ENCODE measurements at regions of chr9 and their contacts with region 1.

Region 1: DNA sequence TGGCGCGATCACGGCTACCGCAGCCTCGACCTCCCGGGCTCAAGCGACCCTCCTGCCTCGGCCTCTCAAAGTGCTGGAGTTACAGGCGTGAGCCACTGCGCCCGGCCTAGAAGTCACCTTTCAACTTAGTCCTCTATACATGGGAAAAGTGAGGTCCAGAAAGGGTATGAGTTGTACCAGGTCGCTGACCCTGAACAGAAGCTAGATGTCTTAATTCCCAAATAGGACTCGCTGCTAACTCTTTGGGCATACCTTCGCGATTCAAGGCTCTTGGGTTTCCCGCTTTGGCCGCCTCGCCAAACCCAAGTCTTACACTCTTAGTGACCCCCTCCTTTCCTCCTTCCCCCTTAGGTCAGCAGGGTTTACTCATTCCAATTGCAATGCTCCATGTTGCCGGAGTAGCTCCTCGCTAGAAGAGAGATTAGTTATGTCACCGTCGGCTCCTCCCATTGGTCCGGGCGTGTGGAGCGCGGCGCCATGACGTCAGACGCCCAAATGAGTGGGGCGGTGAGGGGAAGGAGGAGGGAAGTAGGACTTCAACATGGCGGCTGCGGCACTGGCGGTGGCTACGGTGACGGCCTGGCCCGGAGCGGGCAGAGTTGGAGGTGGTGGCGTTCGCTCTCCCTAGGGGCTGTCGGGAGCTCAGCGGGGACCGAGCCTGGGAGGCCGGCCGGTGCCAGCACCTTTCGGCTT is at the start of gene UBAP1:
- DNase-seq: peak; percentile 99
- H3K4me3 Mint-ChIP-seq: peak within 1 kb of the TSS; percentile 99
- H3K27ac Mint-ChIP-seq: peak within 1 kb of the TSS; percentile 99
- H3K4me1 Mint-ChIP-seq: peaks cover 16% of the 10 kb centered on the region
- H3K27me3 Mint-ChIP-seq: no peaks in the 10 kb centered on the region
- CTCF ChIP-seq: no peak
- total RNA-seq, gene UBAP1: 58.0 and 64.4 TPM in 2 replicates

Region 2: DNA sequence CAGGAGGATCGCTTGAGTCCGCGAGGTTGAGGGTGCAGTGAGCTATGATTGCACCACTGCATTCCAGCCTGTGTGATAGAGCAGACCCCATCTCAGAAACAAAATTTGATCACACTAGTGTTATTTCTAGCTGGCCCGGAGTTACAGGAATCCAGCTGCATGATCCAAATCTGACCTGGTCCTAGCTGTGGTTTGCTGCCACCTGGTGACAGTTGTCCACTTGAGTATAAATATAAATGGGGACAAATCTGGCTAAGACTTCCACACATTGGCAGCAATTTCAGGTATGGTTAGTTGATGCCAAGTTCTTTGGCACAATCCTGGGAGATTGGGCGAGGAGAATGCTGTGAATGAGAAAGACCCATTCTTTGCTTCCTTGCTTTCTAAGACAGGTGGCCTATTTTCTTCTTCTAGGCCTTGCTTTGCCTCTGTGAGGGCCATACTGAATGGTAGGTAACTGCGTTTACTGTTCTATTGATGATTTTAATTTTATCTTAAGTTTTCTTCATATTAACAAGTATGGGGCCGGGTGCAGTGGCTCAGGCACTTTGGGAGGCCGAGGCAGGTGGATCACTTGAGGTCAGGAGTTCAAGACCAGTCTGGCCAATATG is 326.3 kb before region 1 on chr9:
- CTCF ChIA-PET with region 1: no interaction called
- POLR2A ChIA-PET with region 1: no interaction called
- intact Hi-C with region 1: no loop called
- DNase-seq: peak; percentile 76
- H3K4me3 Mint-ChIP-seq: no peak overlapping the region
- H3K27ac Mint-ChIP-seq: no peak overlapping the region
- H3K4me1 Mint-ChIP-seq: peaks cover 12% of the 10 kb centered on the region
- H3K27me3 Mint-ChIP-seq: no peaks in the 10 kb centered on the region
- CTCF ChIP-seq: peak; percentile 74

Region 3: DNA sequence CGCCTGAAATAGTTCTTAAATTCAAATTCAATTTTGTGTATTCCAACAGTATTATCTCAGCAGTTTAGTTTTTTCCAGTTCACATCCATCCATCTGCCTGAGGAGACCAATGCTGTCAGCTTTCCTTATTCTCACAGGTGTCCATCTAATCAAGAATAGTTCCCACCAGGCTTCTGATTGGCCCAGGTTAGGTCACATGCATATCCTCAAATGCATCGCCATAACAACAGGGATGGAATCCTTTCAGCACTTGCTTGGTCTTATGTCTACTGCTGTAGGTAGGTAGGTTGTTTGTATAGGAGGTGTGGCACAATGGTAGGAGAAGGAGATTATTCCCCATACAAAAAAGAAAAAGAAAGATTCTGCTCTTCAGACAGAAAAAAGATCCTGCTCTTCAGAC is 270.5 kb before region 1 on chr9:
- CTCF ChIA-PET with region 1: no interaction called
- POLR2A ChIA-PET with region 1: no interaction called
- intact Hi-C with region 1: no loop called
- DNase-seq: no peak
- H3K4me3 Mint-ChIP-seq: no peak overlapping the region
- H3K27ac Mint-ChIP-seq: no peak overlapping the region
- H3K4me1 Mint-ChIP-seq: peaks cover 6% of the 10 kb centered on the region
- H3K27me3 Mint-ChIP-seq: no peaks in the 10 kb centered on the region
- CTCF ChIP-seq: no peak

Region 4: DNA sequence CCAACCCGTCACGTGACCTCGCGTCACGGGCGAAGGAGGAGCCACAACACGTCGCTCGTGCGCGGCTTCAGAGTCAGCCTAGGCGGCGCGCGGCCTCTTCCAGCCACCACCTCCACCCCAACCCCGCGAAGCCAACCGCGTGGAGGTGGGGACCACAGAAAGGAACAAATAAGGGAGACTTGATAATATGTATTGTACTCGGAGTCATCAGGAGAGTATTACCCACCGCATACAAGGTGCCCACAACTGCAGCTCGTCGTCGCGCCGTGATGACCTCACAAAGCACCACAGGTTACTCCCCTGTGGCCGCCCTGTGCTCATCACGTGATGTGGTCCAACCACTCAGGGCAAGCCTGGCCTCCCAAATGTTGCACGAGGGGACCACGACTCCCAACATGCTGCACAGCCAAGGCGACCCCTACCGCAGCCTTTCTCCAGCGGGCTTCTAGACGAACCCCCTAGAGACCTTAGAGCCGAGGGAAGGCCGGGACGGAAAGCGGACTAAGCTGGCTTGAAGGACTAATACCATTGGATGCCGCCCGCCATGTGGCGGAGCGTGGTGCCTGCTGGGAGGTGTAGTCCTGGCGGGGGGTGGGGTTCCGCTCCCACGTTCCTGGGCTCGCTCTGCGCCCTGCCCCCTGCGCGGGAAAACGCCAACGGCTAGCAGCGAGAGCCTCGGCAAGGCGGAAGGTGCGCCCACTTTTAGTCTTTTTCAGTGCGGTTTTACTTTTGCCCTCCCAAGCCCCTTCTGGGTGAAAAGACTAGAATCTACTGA is 129.6 kb before region 1 on chr9:
- CTCF ChIA-PET with region 1: no interaction called
- POLR2A ChIA-PET with region 1: interaction called, 25 read pairs
- intact Hi-C with region 1: no loop called
- DNase-seq: peak; percentile 98
- H3K4me3 Mint-ChIP-seq: peak overlapping the region; percentile 89
- H3K27ac Mint-ChIP-seq: peak overlapping the region; percentile 99
- H3K4me1 Mint-ChIP-seq: peaks cover 20% of the 10 kb centered on the region
- H3K27me3 Mint-ChIP-seq: no peaks in the 10 kb centered on the region
- CTCF ChIP-seq: no peak

Region 5: DNA sequence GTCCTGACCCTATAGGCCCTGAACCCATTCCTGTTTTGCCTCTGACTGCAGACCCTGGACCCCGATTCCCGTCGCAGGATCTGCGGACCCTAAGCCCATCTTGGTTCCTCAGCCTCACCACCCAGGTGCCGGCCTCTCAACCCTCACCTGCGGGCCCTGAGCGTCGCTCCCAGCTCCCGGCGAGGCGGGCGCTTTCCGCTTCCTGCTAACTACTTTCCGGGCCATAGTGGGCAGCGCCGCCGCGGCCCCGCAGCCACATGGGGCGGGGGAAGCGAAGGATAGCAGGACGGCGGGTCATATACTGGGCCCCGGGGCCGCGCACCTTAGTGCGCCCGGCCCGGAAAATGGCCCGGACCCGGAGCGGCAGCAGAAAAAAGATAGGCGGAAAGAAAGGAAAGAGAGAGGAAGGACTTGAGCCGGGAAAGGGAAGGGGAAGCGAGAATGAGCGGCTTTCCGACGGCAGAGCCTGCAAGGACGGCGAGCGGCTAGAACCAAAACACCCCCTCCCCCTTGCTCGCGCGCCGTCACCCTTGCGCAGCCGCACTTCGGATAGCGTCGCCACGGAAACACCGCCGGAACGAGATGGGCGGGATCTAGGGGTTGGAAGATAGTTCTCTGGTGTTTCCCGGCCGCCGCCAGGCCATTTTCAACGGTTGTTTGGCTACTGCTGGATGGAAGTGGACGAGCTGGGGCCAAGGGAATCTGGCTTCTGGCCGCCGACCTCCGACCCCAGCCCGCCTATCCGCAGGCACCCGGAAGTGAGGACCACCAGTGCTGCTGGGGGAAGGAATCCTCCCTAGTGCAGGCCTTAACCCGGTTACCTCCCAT is 52.2 kb before region 1 on chr9 and contains the start of gene DCAF12:
- CTCF ChIA-PET with region 1: interaction called, 3 read pairs
- POLR2A ChIA-PET with region 1: interaction called, 71 read pairs
- intact Hi-C with region 1: loop called (anchors 1 kb)
- DNase-seq: peak; percentile 93
- H3K4me3 Mint-ChIP-seq: peak within 1 kb of the TSS; percentile 93
- H3K27ac Mint-ChIP-seq: peak within 1 kb of the TSS; percentile 93
- H3K4me1 Mint-ChIP-seq: peaks cover 40% of the 10 kb centered on the region
- H3K27me3 Mint-ChIP-seq: no peaks in the 10 kb centered on the region
- CTCF ChIP-seq: no peak
- total RNA-seq, gene DCAF12: 39.8 and 44.2 TPM in 2 replicates

Region 6: DNA sequence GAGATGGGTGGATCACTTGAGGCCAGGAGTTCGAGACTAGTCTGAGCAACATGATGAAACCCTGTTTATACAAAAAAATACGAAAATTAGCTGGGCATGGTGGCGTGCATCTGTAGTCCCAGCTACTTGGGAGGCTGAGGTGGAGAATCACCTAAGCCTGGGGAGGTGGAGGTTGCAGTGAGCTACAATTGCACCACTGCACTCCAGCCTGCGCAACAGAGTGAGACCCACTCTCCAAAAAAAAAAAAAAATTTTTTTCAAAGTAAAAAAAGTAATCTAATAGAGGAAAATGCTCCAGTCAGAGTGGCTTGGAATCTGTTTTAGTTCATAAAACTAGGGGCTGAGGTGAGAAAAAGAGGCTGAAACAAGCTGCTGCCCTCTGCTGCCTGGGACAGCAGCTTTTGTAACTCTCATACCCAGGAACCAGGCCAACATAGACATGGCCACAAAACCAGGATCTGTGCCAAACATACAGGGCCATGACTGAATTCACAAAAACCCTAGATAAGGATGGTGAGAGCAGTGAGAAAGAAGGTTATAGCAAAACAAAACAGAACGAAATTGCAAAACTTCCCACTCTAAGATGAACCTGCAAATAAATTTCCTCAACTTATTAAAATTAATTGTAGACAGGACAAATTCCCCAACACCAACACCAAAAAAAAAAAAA is 39.1 kb before region 1 on chr9:
- CTCF ChIA-PET with region 1: no interaction called
- POLR2A ChIA-PET with region 1: interaction called, 17 read pairs
- intact Hi-C with region 1: no loop called
- DNase-seq: peak; percentile 89
- H3K4me3 Mint-ChIP-seq: no peak overlapping the region
- H3K27ac Mint-ChIP-seq: no peak overlapping the region
- H3K4me1 Mint-ChIP-seq: peaks cover 15% of the 10 kb centered on the region
- H3K27me3 Mint-ChIP-seq: no peaks in the 10 kb centered on the region
- CTCF ChIP-seq: peak; percentile 30

Region 7: GRCh38 chr9:34158362-34158869 is 20.2 kb before region 1 on chr9:
- CTCF ChIA-PET with region 1: interaction called, 5 read pairs
- POLR2A ChIA-PET with region 1: interaction called, 93 read pairs
- intact Hi-C with region 1: loop called (anchors 2 kb)
- DNase-seq: peak; percentile 84
- H3K4me3 Mint-ChIP-seq: no peak overlapping the region
- H3K27ac Mint-ChIP-seq: peak overlapping the region; percentile 57
- H3K4me1 Mint-ChIP-seq: peaks cover 20% of the 10 kb centered on the region
- H3K27me3 Mint-ChIP-seq: no peaks in the 10 kb centered on the region
- CTCF ChIP-seq: no peak

Region 8: DNA sequence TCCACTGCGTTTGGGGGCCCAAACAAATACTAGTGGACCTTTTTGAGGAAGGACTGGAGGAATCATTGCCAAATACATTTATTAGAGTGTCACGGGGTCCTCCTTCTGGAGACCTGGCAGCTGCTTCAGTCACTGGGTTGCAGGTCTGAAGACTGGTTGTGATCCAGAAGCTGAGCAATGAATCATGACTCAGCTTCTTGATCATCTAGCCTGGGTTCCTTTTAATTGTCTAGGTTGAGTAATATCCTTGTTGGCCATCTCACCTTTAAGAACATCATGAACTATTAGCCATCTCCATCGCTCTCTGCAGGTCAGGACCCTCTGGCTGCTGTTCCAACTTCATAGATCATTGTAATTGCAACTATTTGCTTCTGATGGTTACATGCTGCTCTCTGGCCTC is 15.2 kb before region 1 on chr9:
- CTCF ChIA-PET with region 1: interaction called, 5 read pairs
- POLR2A ChIA-PET with region 1: interaction called, 93 read pairs
- intact Hi-C with region 1: loop called (anchors 2 kb)
- DNase-seq: peak; percentile 93
- H3K4me3 Mint-ChIP-seq: peak overlapping the region; percentile 41
- H3K27ac Mint-ChIP-seq: peak overlapping the region; percentile 36
- H3K4me1 Mint-ChIP-seq: peaks cover 23% of the 10 kb centered on the region
- H3K27me3 Mint-ChIP-seq: no peaks in the 10 kb centered on the region
- CTCF ChIP-seq: no peak

Region 9: GRCh38 chr9:34203275-34203991 is 24.8 kb after region 1 on chr9:
- CTCF ChIA-PET with region 1: interaction called, 4 read pairs
- POLR2A ChIA-PET with region 1: interaction called, 18 read pairs
- intact Hi-C with region 1: no loop called
- DNase-seq: no peak
- H3K4me3 Mint-ChIP-seq: no peak overlapping the region
- H3K27ac Mint-ChIP-seq: peak overlapping the region; percentile 83
- H3K4me1 Mint-ChIP-seq: peaks cover 35% of the 10 kb centered on the region
- H3K27me3 Mint-ChIP-seq: no peaks in the 10 kb centered on the region
- CTCF ChIP-seq: no peak

Region 10: GRCh38 chr9:34271265-34272006 is 92.8 kb after region 1 on chr9:
- CTCF ChIA-PET with region 1: no interaction called
- POLR2A ChIA-PET with region 1: no interaction called
- intact Hi-C with region 1: no loop called
- DNase-seq: no peak
- H3K4me3 Mint-ChIP-seq: no peak overlapping the region
- H3K27ac Mint-ChIP-seq: no peak overlapping the region
- H3K4me1 Mint-ChIP-seq: no peaks in the 10 kb centered on the region
- H3K27me3 Mint-ChIP-seq: no peaks in the 10 kb centered on the region
- CTCF ChIP-seq: no peak

Region 11: GRCh38 chr9:35357116-35357515 is 1178.5 kb after region 1 on chr9:
- CTCF ChIA-PET with region 1: no interaction called
- POLR2A ChIA-PET with region 1: no interaction called
- intact Hi-C with region 1: no loop called
- DNase-seq: no peak
- H3K4me3 Mint-ChIP-seq: no peak overlapping the region
- H3K27ac Mint-ChIP-seq: no peak overlapping the region
- H3K4me1 Mint-ChIP-seq: no peaks in the 10 kb centered on the region
- H3K27me3 Mint-ChIP-seq: no peaks in the 10 kb centered on the region
- CTCF ChIP-seq: no peak

Measured in MCF 10A (cell line).